Gastrocnemius medialis (tissue), 4 donors: ENCODE measurements at regions of chr19 and their contacts with region 1.

Region 1: GRCh38 chr19:37313335-37313627 is 57.6 kb upstream of the ZNF527 start:
- DNase-seq: no peak
- ATAC-seq: no peak
- H3K4me3 ChIP-seq: peak overlapping the region in 1 of 4 donors; percentile 47
- H3K27ac ChIP-seq: peak overlapping the region in 1 of 4 donors; percentile 18
- H3K4me1 ChIP-seq: peaks cover 0 to 5% of the 10 kb centered on the region in 2 donors
- H3K27me3 ChIP-seq: peaks cover 0 to 10% (median 0%) of the 10 kb centered on the region in 3 donors
- CTCF ChIP-seq: no peak
- POLR2A ChIP-seq: no peak

Region 2: DNA sequence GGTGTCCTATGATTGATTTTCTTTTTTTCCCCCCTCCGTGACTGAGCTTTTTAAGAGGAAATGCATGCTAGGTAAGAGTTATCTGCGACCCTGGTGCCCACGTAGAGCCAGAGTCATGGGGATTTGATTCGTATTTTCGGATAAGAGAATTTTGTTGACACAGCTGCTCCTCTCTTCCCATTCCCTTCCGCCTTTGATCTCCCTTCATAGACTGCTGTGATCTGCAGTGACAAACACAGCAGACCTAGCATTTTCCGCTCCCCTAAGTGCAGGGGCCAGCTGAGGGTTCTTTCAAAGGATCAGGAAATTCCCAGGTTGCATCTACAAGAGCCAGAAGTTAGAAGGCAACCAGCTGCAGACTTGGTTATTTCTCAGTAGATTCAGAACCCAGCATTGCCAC is 326.7 kb before region 1 on chr19:
- in situ Hi-C with region 1: no loop called
- intact Hi-C with region 1: no loop called
- DNase-seq: no peak
- ATAC-seq: no peak
- H3K4me3 ChIP-seq: no peak overlapping the region
- H3K27ac ChIP-seq: no peak overlapping the region
- H3K4me1 ChIP-seq: no peaks in the 10 kb centered on the region
- H3K27me3 ChIP-seq: no peaks in the 10 kb centered on the region
- CTCF ChIP-seq: no peak
- POLR2A ChIP-seq: no peak

Region 3: GRCh38 chr19:37172368-37173366 is 140.6 kb before region 1 on chr19 and contains the start of gene ZNF585A:
- in situ Hi-C with region 1: no loop called
- intact Hi-C with region 1: loop called (anchors 1 kb)
- DNase-seq: peak; percentile 90 to 93
- ATAC-seq: peak; percentile 100
- H3K4me3 ChIP-seq: peak within 1 kb of the TSS; percentile 74 to 85 (median 80)
- H3K27ac ChIP-seq: peak within 1 kb of the TSS; percentile 80 to 90 (median 84)
- H3K4me1 ChIP-seq: peaks cover 7 to 12% of the 10 kb centered on the region in 2 donors
- H3K27me3 ChIP-seq: no peaks in the 10 kb centered on the region
- CTCF ChIP-seq: peak in 2 of 5 experiments; percentile 21 to 32
- POLR2A ChIP-seq: peak in 1 of 2 donors; percentile 14
- total RNA-seq, gene ZNF585A: 2.0 to 10.5 (median 6.0) TPM

Region 4: GRCh38 chr19:37334179-37335071 is 21.1 kb after region 1 on chr19:
- in situ Hi-C with region 1: no loop called
- intact Hi-C with region 1: loop called (anchors 1 kb)
- DNase-seq: peak; percentile 87 to 91
- ATAC-seq: peak; percentile 99 to 100
- H3K4me3 ChIP-seq: peak overlapping the region; percentile 66 to 93 (median 82)
- H3K27ac ChIP-seq: peak overlapping the region; percentile 83 to 91 (median 88)
- H3K4me1 ChIP-seq: peaks cover 16 to 25% of the 10 kb centered on the region in 2 donors
- H3K27me3 ChIP-seq: no peaks in the 10 kb centered on the region
- CTCF ChIP-seq: no peak
- POLR2A ChIP-seq: peak; percentile 29 to 61